ENCODE measurements at regions of chr9 and their contacts with region 1.

Region 1: GRCh38 chr9:115442054-115442453 is 324.1 kb upstream of the TNC start:
- DNase-seq: no peak
- H3K4me3 ChIP-seq: no peak overlapping the region
- H3K27ac ChIP-seq: no peak overlapping the region
- H3K4me1 ChIP-seq: no peaks in the 10 kb centered on the region
- H3K27me3 ChIP-seq: no peaks in the 10 kb centered on the region
- CTCF ChIP-seq: no peak
- EP300 ChIP-seq: no peak
- POLR2A ChIP-seq: no peak

Region 2: DNA sequence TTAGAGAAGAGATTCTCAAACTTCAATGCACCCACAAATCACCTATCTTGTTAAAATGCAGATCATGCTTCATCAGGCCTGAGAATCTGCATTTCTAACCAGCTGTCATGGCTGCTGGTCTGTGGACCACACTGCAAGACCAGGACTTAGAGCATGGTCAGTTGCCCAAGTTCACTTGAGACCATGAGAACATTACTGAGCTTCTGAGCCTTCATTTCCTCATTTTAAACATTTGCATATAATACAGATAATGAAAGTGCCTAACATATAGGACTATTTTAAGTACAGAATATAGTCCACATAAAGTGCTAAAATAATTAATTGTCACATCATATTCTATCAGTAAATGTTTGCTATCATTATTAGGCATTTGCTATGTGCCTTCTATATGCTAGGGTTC is 63.3 kb before region 1 on chr9:
- intact Hi-C with region 1: no loop called
- DNase-seq: no peak
- H3K4me3 ChIP-seq: no peak overlapping the region
- H3K27ac ChIP-seq: no peak overlapping the region
- H3K4me1 ChIP-seq: no peaks in the 10 kb centered on the region
- H3K27me3 ChIP-seq: no peaks in the 10 kb centered on the region
- CTCF ChIP-seq: no peak
- EP300 ChIP-seq: no peak
- POLR2A ChIP-seq: no peak

Region 3: DNA sequence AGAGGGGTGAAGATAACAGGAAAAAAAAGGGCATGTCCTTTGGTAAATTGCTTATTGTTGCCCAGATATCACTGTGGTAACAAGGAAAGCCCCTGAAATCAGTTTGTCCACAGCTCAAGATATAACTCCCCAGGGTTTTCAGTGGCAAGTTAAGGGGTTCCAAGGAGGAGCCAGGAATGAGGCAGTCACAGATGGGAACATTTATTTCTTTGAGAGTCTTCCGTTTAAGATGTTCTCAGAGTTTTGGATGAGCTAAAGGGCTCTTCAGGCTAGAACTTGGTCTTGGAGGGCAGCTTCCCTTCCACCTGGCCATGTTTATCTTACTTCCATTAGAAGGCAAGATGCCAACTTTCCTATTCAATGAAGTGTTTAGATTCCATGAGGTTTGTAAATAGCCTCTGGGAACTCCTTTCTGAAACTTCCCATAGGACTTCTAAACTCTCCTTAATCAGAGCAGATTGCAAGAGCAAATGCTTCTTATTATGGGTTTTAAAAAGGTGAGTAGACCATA is 46.5 kb before region 1 on chr9:
- intact Hi-C with region 1: loop called in 1 of 4 experiments (anchors 10 kb)
- DNase-seq: no peak
- H3K4me3 ChIP-seq: no peak overlapping the region
- H3K27ac ChIP-seq: no peak overlapping the region
- H3K4me1 ChIP-seq: no peaks in the 10 kb centered on the region
- H3K27me3 ChIP-seq: no peaks in the 10 kb centered on the region
- CTCF ChIP-seq: no peak
- EP300 ChIP-seq: no peak
- POLR2A ChIP-seq: no peak

Region 4: DNA sequence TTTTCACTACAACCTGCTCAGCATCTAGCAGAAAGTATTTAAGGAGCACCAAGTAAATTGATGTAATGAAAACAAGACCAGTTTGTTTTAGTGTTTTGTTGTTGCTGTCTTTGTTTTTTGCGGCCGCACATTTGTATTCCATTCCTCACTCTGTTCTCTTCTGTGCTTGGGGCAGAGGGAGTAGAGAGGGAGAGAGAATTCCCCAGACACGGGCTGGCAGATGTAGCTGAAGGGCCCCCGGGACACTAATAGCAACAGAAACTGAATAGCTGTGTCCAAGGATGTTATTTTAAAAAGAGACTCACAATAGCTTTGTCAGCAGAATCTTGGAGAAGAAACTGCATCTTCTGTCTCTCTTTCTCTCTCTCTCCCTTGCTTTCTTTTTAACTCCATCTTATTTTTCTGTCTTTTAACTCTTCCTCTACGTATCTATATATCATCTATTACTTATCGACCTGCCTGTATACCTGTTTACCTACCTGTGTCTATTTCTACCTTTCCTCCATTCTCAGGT is 856.9 kb after region 1 on chr9:
- intact Hi-C with region 1: no loop called
- DNase-seq: no peak
- H3K4me3 ChIP-seq: no peak overlapping the region
- H3K27ac ChIP-seq: no peak overlapping the region
- H3K4me1 ChIP-seq: peaks cover 3% of the 10 kb centered on the region
- H3K27me3 ChIP-seq: no peaks in the 10 kb centered on the region
- CTCF ChIP-seq: no peak
- EP300 ChIP-seq: no peak
- POLR2A ChIP-seq: no peak